Common myeloid progenitor, CD34-positive (primary cell): ENCODE measurements at regions of chr1 and their contacts with region 1.

Region 1: GRCh38 chr1:181088079-181089016 is at the start of gene IER5:
- DNase-seq: peak; percentile 95 to 98 (median 98)
- H3K4me3 ChIP-seq: peak within 1 kb of the TSS; percentile 63 to 95 (median 86)
- H3K27ac ChIP-seq: peak within 1 kb of the TSS; percentile 67 to 86
- H3K4me1 ChIP-seq: peaks cover 25 to 52% (median 31%) of the 10 kb centered on the region in 4 experiments
- H3K27me3 ChIP-seq: no peaks in the 10 kb centered on the region

Region 2: GRCh38 chr1:180926164-180926981 is 162.0 kb before region 1 on chr1:
- CTCF ChIA-PET with region 1: no interaction called
- POLR2A ChIA-PET with region 1: no interaction called
- DNase-seq: peak; percentile 75 to 94 (median 89)
- H3K4me3 ChIP-seq: peak overlapping the region in 3 of 7 experiments; percentile 32 to 45 (median 45)
- H3K27ac ChIP-seq: no peak overlapping the region
- H3K4me1 ChIP-seq: peaks cover 0 to 52% (median 40%) of the 10 kb centered on the region in 4 experiments
- H3K27me3 ChIP-seq: no peaks in the 10 kb centered on the region

Region 3: GRCh38 chr1:181105134-181106021 is 17.0 kb after region 1 on chr1:
- CTCF ChIA-PET with region 1: interaction called, 95 read pairs
- POLR2A ChIA-PET with region 1: interaction called, 63 read pairs
- DNase-seq: peak; percentile 83 to 92 (median 92)
- H3K4me3 ChIP-seq: peak overlapping the region; percentile 64 to 88 (median 76)
- H3K27ac ChIP-seq: peak overlapping the region in 1 of 2 experiments; percentile 73
- H3K4me1 ChIP-seq: peaks cover 0 to 58% (median 40%) of the 10 kb centered on the region in 4 experiments
- H3K27me3 ChIP-seq: peaks cover 0 to 2% (median 0%) of the 10 kb centered on the region in 5 experiments

Region 4: DNA sequence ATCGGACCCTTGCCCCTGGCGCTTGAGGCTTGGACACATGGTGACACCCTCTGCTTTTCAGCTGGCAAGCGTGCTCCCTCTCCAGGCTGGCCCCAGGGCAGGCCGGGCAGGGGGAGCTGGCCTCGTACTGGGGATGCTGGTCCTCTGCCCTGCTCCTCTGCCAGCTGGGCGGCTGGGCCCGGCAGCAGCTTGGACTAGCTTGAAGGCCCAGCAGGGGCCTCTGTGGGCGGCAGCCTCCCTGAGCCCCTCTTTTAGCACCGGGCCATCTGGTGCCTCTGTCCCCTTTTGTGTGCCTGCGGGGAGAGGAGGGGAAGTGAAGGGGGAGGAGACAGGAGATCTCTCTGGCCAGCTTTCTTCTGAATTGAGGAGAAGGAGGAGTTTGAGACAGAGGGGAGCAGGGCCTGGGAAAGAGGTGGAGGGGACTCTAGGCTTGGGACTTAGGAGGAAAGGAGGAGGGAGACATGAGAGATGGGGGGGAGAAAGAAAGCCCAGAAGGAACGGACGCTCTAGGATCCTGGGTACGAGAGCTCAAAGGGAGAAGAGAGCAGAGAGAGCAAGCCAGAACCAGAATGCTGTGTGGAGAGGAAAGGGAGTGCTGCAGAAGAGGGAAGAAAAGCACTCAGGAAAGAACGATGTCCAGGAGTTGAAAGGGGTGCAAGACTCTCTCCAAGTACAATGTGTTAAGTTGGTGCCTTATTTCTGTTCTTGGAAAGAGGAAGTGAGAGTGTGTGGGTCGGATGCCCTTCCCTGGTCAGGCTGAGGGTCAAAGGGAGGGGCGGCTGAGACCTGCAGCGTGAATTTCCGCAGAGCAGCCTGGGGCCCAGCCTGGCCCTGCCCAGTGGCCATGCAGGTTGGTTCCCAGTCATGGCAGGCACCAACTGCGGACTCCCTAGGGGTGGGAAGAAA is 40.5 kb after region 1 on chr1:
- CTCF ChIA-PET with region 1: interaction called, 8 read pairs
- POLR2A ChIA-PET with region 1: interaction called, 13 read pairs
- DNase-seq: peak in 2 of 3 donors; percentile 61 to 72
- H3K4me3 ChIP-seq: peak overlapping the region in 5 of 7 experiments; percentile 21 to 48 (median 38)
- H3K27ac ChIP-seq: peak overlapping the region in 1 of 2 experiments; percentile 28
- H3K4me1 ChIP-seq: peaks cover 12 to 82% (median 53%) of the 10 kb centered on the region in 4 experiments
- H3K27me3 ChIP-seq: no peaks in the 10 kb centered on the region

Region 5: GRCh38 chr1:181152892-181153633 is 64.7 kb after region 1 on chr1:
- CTCF ChIA-PET with region 1: interaction called, 14 read pairs
- POLR2A ChIA-PET with region 1: interaction called, 10 read pairs
- DNase-seq: peak; percentile 95 to 99 (median 98)
- H3K4me3 ChIP-seq: peak overlapping the region in 3 of 7 experiments; percentile 7 to 46 (median 41)
- H3K27ac ChIP-seq: peak overlapping the region in 1 of 2 experiments; percentile 67
- H3K4me1 ChIP-seq: peaks cover 33 to 58% (median 51%) of the 10 kb centered on the region in 4 experiments
- H3K27me3 ChIP-seq: peaks cover 0 to 4% (median 0%) of the 10 kb centered on the region in 5 experiments

Region 6: GRCh38 chr1:181166377-181167196 is 78.2 kb after region 1 on chr1:
- CTCF ChIA-PET with region 1: interaction called, 38 read pairs
- POLR2A ChIA-PET with region 1: no interaction called
- DNase-seq: peak; percentile 79 to 90 (median 89)
- H3K4me3 ChIP-seq: no peak overlapping the region
- H3K27ac ChIP-seq: no peak overlapping the region
- H3K4me1 ChIP-seq: peaks cover 0 to 4% (median 0%) of the 10 kb centered on the region in 4 experiments
- H3K27me3 ChIP-seq: peaks cover 0 to 6% (median 0%) of the 10 kb centered on the region in 5 experiments